ENCODE measurements at regions of chr6 and their contacts with region 1.

Region 1: GRCh38 chr6:5302995-5303622 is 41.8 kb downstream of the FARS2 start:
- DNase-seq: peak; percentile 84
- ATAC-seq: peak; percentile 73
- H3K4me3 Mint-ChIP-seq: peak overlapping the region; percentile 69
- H3K27ac Mint-ChIP-seq: peak overlapping the region; percentile 91
- H3K4me1 Mint-ChIP-seq: peaks cover 52% of the 10 kb centered on the region
- H3K27me3 Mint-ChIP-seq: no peaks in the 10 kb centered on the region

Region 2: DNA sequence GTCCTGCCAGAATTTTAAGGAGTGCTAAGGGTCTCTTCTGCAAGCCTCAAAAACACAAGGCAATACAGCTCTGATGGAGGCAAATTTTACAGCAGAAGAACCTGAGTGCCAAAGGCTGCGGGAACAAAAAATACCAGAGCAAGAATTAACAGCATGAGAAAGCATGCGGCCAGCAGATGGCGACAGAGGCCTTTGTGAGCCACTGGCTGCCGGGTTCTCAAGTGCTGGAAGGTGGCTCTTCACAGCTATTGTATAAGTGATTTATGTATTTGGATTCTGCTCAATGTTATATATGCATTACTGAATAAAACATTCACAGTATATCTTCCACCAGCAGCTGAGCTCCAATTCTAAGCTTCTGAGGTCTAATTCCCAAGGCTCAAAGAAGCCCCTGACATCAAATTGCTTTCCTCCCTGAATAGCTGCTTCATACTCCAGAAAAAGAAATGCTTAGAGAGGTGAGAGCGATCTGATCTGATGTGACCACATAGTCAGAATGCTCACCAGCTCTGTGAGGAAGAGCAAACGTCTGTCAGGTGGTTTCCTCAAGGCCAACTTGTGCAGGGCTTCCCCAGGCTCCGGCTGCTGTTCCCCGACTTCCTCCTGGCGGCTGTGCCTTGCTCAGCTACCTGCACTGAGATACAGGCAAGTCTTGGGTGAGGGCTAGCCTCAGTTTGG is 159.3 kb before region 1 on chr6:
- CTCF ChIA-PET with region 1: interaction called, 63 read pairs
- DNase-seq: peak; percentile 87
- ATAC-seq: peak; percentile 86
- H3K4me3 Mint-ChIP-seq: no peak overlapping the region
- H3K27ac Mint-ChIP-seq: no peak overlapping the region
- H3K4me1 Mint-ChIP-seq: no peaks in the 10 kb centered on the region
- H3K27me3 Mint-ChIP-seq: no peaks in the 10 kb centered on the region

Region 3: DNA sequence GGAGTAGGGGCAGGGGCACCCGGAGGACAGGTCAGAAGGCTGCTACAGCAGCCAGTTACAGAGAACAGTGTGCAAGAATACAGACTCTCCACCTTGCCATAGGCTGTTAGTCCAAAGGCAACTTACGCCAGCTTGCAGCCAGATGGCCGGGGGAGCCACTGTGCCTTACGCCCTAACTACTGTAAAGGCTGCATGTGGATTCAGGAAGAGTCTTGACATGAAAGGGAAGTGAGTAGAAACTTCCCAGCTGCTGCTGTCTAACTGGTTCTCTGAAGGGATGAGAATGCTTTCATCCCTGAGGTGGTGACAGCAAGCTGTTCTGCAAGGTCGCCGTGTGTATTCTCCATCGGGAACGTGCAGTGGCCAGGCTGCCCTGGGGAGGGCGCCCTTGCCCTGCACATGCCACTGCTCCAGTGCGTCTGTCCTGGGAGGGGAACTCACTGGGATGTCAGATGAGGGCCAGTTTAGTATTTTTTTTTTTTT is 88.5 kb before region 1 on chr6:
- CTCF ChIA-PET with region 1: interaction called, 18 read pairs
- DNase-seq: peak; percentile 50
- ATAC-seq: peak; percentile 45
- H3K4me3 Mint-ChIP-seq: no peak overlapping the region
- H3K27ac Mint-ChIP-seq: no peak overlapping the region
- H3K4me1 Mint-ChIP-seq: peaks cover 9% of the 10 kb centered on the region
- H3K27me3 Mint-ChIP-seq: no peaks in the 10 kb centered on the region

Region 4: GRCh38 chr6:5270093-5270680 is 32.9 kb before region 1 on chr6:
- CTCF ChIA-PET with region 1: interaction called, 22 read pairs
- DNase-seq: no peak
- ATAC-seq: no peak
- H3K4me3 Mint-ChIP-seq: no peak overlapping the region
- H3K27ac Mint-ChIP-seq: peak overlapping the region; percentile 52
- H3K4me1 Mint-ChIP-seq: peaks cover 61% of the 10 kb centered on the region
- H3K27me3 Mint-ChIP-seq: no peaks in the 10 kb centered on the region

Region 5: DNA sequence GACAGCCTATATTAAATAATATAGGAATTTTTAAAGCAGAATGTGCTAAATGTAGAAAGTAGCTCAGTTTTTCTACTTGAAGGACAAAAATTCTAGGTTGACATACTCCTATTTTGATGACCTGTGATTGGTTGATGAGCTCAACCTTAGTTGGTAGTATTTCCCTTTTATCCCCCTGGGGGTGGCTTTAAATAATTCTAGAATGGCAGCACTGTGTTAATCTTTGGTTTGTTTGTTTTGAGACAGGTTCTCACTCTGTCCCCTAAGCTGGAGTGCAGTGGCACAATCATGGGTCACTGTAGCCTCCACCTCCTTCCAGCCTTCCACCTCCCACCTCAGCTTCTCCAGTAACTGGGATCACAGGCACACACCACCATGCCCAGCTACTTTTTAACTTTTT is 12.6 kb before region 1 on chr6:
- CTCF ChIA-PET with region 1: interaction called, 10 read pairs
- DNase-seq: no peak
- ATAC-seq: no peak
- H3K4me3 Mint-ChIP-seq: no peak overlapping the region
- H3K27ac Mint-ChIP-seq: no peak overlapping the region
- H3K4me1 Mint-ChIP-seq: peaks cover 56% of the 10 kb centered on the region
- H3K27me3 Mint-ChIP-seq: no peaks in the 10 kb centered on the region

Region 6: DNA sequence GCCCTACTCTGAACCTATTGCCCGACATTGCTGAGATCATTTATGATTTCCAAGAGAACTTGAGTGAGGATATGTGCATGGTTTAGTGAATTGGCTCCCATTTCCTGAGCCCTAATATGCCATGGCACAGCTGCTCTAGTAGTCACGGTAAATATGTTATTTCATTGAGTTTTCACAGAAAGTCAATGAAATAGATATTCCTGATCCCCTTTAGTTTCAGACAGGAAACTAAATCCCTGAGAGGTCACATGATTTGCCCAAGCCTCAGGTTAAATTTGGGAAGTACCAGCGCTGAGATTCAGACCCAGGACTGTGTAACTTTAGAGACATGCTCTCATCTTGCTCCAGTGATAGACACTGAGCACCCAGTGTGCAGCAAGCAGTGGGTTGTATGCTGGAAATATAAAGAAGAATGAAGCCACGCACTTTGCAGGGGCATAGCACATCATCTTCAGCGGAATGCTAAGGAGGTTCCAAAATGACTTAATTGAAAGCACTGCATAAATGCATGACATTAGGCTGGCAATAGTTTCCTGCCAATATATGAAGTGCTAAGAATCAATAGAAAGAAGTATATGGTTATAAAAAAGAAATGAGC is 28.8 kb after region 1 on chr6:
- CTCF ChIA-PET with region 1: no interaction called
- DNase-seq: no peak
- ATAC-seq: no peak
- H3K4me3 Mint-ChIP-seq: no peak overlapping the region
- H3K27ac Mint-ChIP-seq: no peak overlapping the region
- H3K4me1 Mint-ChIP-seq: peaks cover 4% of the 10 kb centered on the region
- H3K27me3 Mint-ChIP-seq: no peaks in the 10 kb centered on the region

Region 7: GRCh38 chr6:6246544-6246943 is 943.4 kb after region 1 on chr6:
- CTCF ChIA-PET with region 1: no interaction called
- DNase-seq: no peak
- ATAC-seq: no peak
- H3K4me3 Mint-ChIP-seq: no peak overlapping the region
- H3K27ac Mint-ChIP-seq: no peak overlapping the region
- H3K4me1 Mint-ChIP-seq: no peaks in the 10 kb centered on the region
- H3K27me3 Mint-ChIP-seq: peaks cover 16% of the 10 kb centered on the region

Measured in activated CD8-positive, alpha-beta memory T cell treated with anti-CD3 and anti-CD28 coated beads, Interleukin-2, amount 10 ng/mL, durations not matched to agents 7 days and 5 days (primary cell).